ENCODE measurements at regions of chr1 and their contacts with region 1.

Region 1: GRCh38 chr1:95309031-95309471 is 75.0 kb downstream of the RWDD3 start:
- DNase-seq: no peak
- ATAC-seq: peak; percentile 57 to 63

Region 2: GRCh38 chr1:95023399-95024043 is 285.5 kb before region 1 on chr1:
- intact Hi-C with region 1: no loop called
- DNase-seq: no peak
- ATAC-seq: peak; percentile 73 to 87

Region 3: GRCh38 chr1:95467036-95467435 is 158.0 kb after region 1 on chr1:
- intact Hi-C with region 1: loop called (anchors 5 to 10 kb)
- DNase-seq: no peak
- ATAC-seq: no peak

Measured in left cardiac atrium (tissue), 4 donors.